Activated CD8-positive, alpha-beta memory T cell treated with anti-CD3 and anti-CD28 coated beads, Interleukin-2, amount 10 ng/mL, durations not matched to agents 7 days and 5 days (primary cell): ENCODE measurements at regions of chr7 and their contacts with region 1.

Region 1: GRCh38 chr7:132451161-132451560 is 125.1 kb downstream of the PLXNA4 start:
- DNase-seq: peak; percentile 85
- ATAC-seq: peak; percentile 79
- H3K4me3 Mint-ChIP-seq: peak overlapping the region; percentile 2
- H3K27ac Mint-ChIP-seq: peak overlapping the region; percentile 79
- H3K4me1 Mint-ChIP-seq: peaks cover 84% of the 10 kb centered on the region
- H3K27me3 Mint-ChIP-seq: no peaks in the 10 kb centered on the region

Region 2: DNA sequence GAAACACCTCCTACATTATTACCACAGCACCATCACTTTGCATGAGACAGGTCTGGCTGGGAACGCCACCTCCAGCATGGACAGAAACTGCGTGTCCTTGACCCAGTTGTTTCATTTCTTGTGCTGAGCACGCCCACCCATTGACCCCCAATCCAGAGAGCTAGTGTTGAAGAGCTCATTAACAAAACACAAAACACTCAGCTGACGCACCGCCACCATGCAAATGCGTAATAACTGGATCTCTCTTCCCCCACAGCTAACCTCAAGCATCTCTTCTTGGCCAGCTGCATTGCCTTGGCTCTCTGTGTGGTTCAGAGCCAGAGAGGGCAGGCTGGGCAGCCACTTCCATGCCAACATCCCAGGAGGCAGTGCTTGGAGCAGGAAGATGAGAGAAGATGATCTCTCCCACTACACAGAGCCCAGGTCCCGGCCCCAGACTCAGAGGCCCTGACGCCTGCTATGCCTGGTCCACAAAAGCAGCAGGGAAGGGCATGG is 48.4 kb before region 1 on chr7:
- CTCF ChIA-PET with region 1: no interaction called
- DNase-seq: no peak
- ATAC-seq: no peak
- H3K4me3 Mint-ChIP-seq: no peak overlapping the region
- H3K27ac Mint-ChIP-seq: no peak overlapping the region
- H3K4me1 Mint-ChIP-seq: no peaks in the 10 kb centered on the region
- H3K27me3 Mint-ChIP-seq: no peaks in the 10 kb centered on the region

Region 3: GRCh38 chr7:132430861-132431822 is 20.0 kb before region 1 on chr7:
- CTCF ChIA-PET with region 1: interaction called, 17 read pairs
- DNase-seq: peak; percentile 92
- ATAC-seq: peak; percentile 90
- H3K4me3 Mint-ChIP-seq: peak overlapping the region; percentile 14
- H3K27ac Mint-ChIP-seq: peak overlapping the region; percentile 84
- H3K4me1 Mint-ChIP-seq: peaks cover 77% of the 10 kb centered on the region
- H3K27me3 Mint-ChIP-seq: no peaks in the 10 kb centered on the region

Region 4: DNA sequence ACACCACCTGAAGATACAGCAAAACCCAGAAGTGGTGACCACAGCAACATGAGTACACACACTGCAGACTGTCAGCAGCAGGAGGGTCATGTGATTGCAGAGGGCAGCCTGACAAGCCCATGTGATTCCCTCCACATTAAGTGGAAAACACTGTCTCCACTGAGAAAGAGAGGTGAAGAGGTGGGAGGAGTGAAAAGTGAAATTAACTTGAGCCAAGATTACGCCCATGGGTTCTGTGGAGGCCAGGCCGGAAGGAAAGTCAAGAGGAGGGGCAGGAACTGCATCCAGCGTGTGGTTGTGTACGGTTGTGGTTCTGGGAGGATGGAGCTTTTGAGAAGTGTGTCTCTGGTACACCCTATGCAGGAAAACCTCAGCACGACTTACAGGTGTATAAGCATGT is 13.4 kb before region 1 on chr7:
- CTCF ChIA-PET with region 1: interaction called, 17 read pairs
- DNase-seq: peak; percentile 81
- ATAC-seq: peak; percentile 67
- H3K4me3 Mint-ChIP-seq: peak overlapping the region; percentile 13
- H3K27ac Mint-ChIP-seq: peak overlapping the region; percentile 71
- H3K4me1 Mint-ChIP-seq: peaks cover 76% of the 10 kb centered on the region
- H3K27me3 Mint-ChIP-seq: peaks cover 8% of the 10 kb centered on the region